Activated B cell treated with CpG ODN at 0.5 μM for 24 hours (primary cell): ENCODE measurements at regions of chr7 and their contacts with region 1.

Region 1: DNA sequence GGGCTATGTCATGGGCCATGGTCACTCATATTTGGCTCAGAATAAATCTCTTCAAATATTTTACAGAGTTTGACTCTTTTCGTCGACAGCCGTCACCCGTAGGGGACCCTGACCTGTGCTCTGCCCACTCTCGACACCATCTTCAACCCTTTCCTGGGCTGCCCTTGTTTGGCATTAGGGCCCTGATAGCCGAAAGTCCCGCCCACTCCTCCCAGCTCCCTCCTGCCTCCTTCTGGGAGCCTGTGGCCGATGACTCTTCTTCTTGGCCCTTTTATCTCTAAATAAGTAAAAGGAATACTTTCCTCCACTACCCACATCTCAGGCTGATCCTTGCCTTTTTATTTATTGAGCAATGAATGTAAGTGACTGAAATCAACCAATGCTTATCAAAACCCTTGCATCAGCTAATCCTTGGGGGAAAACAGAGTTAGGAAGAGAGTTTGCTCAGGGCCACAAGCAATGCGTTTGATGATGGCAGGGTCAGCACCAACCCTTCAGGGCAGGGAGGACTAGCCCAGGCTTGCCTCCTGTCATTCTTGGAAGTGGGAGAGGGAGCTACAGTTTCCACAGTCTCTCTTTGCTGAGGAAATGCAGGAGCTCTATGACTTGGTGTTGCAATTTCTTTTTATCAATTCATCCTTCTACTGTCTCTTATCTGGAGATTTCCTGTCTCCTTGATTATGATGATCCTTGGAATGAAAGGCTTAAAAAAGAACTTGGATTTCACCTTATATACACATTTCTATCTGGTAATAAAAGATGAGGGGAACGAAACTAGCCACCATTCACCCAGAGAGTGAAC is 218.2 kb upstream of the PODXL start:
- DNase-seq: no peak
- ATAC-seq: no peak
- H3K4me3 Mint-ChIP-seq: no peak overlapping the region
- H3K27ac Mint-ChIP-seq: no peak overlapping the region
- H3K4me1 Mint-ChIP-seq: no peaks in the 10 kb centered on the region
- H3K27me3 Mint-ChIP-seq: peaks cover 3% of the 10 kb centered on the region
- CTCF ChIP-seq: no peak

Region 2: DNA sequence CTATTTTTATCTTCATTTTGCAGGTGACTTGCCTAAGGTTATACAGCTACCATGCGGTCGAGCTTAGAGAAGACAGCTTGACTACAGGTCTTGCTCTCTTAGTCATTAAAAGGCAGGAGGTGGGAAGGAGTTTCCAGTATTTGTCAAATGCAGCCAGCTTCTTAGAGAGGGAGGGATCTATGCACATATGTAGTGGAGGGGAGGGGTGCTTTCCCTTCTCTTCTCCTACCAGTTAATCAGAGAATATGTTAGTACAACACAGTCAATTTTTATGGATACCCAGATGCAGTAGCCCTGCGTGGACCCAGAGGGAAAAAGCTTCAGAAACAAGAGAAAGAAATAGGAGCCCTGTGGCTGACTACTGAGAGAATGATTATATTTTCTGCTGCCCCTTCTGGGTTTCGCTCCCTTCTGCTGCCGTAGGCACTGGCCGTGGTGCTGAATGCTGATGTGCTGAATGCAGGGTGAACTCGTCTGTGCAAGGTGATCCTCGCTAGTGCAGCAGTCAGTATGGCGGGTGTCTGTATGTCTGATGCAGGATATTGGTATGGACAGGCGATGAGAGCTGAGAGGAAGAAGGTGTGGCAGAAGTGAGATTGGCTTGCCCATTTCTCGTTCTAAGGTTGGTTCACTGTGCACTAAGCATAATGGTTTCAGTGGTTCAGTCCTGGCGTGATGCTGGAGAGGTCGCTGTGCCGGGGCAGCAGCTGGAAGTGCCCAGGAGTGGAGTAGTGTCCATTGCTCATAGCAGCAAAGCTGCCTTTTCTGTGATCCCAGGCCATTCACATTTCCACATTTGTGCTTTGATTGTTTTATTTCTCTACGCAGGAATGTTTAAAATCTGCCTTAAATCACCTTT is 29.0 kb before region 1 on chr7:
- CTCF ChIA-PET with region 1: no interaction called
- POLR2A ChIA-PET with region 1: interaction called, 13 read pairs
- intact Hi-C with region 1: no loop called
- DNase-seq: no peak
- ATAC-seq: no peak
- H3K4me3 Mint-ChIP-seq: no peak overlapping the region
- H3K27ac Mint-ChIP-seq: no peak overlapping the region
- H3K4me1 Mint-ChIP-seq: no peaks in the 10 kb centered on the region
- H3K27me3 Mint-ChIP-seq: peaks cover 12% of the 10 kb centered on the region
- CTCF ChIP-seq: no peak